Activated naive CD4-positive, alpha-beta T cell treated with anti-CD3 and anti-CD28 coated beads for 36 hours (primary cell): ENCODE measurements at regions of chr1 and their contacts with region 1.

Region 1: GRCh38 chr1:86499987-86500593 is 31.4 kb downstream of the CLCA1 start:
- DNase-seq: no peak
- H3K4me3 Mint-ChIP-seq: no peak overlapping the region
- H3K27ac Mint-ChIP-seq: no peak overlapping the region
- H3K4me1 Mint-ChIP-seq: peaks cover 7% of the 10 kb centered on the region
- H3K27me3 Mint-ChIP-seq: peaks cover 8% of the 10 kb centered on the region

Region 2: DNA sequence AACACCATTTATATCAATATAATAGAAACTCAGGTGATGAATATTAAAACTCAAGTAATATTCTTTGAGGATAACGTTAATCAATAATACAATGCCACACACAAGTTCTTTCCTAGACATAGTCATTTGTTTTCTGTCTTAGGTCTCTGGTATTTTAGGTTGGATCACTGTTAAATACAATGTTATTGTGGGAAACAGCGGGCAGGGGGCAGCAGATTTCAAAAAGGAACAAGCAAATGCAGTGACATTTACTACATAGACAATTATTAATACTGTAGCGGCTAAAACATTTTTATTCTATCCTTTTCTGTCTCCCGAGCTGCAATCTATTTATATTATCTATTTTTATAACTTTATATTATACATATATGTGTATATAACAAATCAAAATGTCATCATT is 605.4 kb before region 1 on chr1:
- CTCF ChIA-PET with region 1: no interaction called
- intact Hi-C with region 1: no loop called
- DNase-seq: peak; percentile 30
- H3K4me3 Mint-ChIP-seq: no peak overlapping the region
- H3K27ac Mint-ChIP-seq: no peak overlapping the region
- H3K4me1 Mint-ChIP-seq: no peaks in the 10 kb centered on the region
- H3K27me3 Mint-ChIP-seq: peaks cover 2% of the 10 kb centered on the region

Region 3: GRCh38 chr1:86380257-86380861 is 119.7 kb before region 1 on chr1:
- CTCF ChIA-PET with region 1: interaction called, 44 read pairs
- intact Hi-C with region 1: loop called (anchors 1 kb)
- DNase-seq: peak; percentile 18
- H3K4me3 Mint-ChIP-seq: no peak overlapping the region
- H3K27ac Mint-ChIP-seq: no peak overlapping the region
- H3K4me1 Mint-ChIP-seq: peaks cover 8% of the 10 kb centered on the region
- H3K27me3 Mint-ChIP-seq: no peaks in the 10 kb centered on the region

Region 4: DNA sequence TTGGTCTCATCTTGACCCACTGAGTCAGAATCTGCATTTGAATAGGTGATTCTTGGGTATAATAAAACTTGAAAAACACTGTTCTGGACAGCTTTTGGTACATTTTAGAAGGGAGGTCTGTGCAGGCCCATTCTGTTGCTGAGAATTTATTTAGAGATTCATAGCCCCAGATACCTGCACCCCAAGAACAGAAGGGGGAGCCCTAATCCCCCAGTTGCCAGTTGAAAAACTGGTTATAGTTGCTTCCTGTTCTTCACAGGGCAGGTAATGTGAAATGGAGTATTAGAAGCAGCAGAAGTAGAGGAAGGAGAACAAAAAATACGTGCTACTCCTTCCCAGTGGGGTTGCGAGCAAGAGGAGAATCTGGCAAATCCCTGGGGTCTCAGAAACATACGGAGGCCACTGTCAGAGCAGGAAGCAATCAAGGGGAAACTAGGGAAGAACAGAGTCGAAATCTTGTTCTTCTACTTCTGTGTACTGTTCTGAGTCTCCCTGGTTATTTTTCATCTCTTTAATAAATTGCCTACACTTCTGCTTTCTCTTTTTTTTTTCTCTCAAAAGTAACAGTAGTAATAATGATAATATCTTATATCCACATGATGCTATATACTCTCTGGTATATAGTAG is 80.7 kb before region 1 on chr1:
- CTCF ChIA-PET with region 1: interaction called, 10 read pairs
- intact Hi-C with region 1: loop called (anchors 1 kb)
- DNase-seq: peak; percentile 71
- H3K4me3 Mint-ChIP-seq: peak overlapping the region; percentile 60
- H3K27ac Mint-ChIP-seq: no peak overlapping the region
- H3K4me1 Mint-ChIP-seq: peaks cover 4% of the 10 kb centered on the region
- H3K27me3 Mint-ChIP-seq: peaks cover 3% of the 10 kb centered on the region

Region 5: GRCh38 chr1:86447198-86447790 is 52.8 kb before region 1 on chr1:
- CTCF ChIA-PET with region 1: no interaction called
- intact Hi-C with region 1: no loop called
- DNase-seq: no peak
- H3K4me3 Mint-ChIP-seq: no peak overlapping the region
- H3K27ac Mint-ChIP-seq: no peak overlapping the region
- H3K4me1 Mint-ChIP-seq: no peaks in the 10 kb centered on the region
- H3K27me3 Mint-ChIP-seq: no peaks in the 10 kb centered on the region

Region 6: DNA sequence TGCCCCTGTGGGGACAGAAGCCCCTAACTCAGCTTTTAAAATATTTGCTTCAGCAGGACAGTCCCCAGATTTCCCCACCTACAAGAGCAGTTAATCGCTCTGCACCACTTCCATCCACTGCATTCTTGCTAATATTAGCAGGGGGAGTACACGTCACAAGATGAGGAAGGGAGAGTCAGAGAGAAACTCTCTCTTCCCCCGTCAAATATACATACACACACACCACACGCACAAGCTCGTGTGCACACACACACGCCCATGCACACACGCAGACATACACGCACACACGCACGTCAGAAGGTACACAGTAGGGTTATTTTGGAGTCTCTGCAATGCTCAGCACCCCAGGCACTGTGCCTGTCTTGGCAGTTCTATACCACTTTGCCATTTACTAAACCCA is 29.2 kb before region 1 on chr1:
- CTCF ChIA-PET with region 1: interaction called, 8 read pairs
- intact Hi-C with region 1: loop called (anchors 1 kb)
- DNase-seq: no peak
- H3K4me3 Mint-ChIP-seq: no peak overlapping the region
- H3K27ac Mint-ChIP-seq: no peak overlapping the region
- H3K4me1 Mint-ChIP-seq: no peaks in the 10 kb centered on the region
- H3K27me3 Mint-ChIP-seq: peaks cover 1% of the 10 kb centered on the region

Region 7: GRCh38 chr1:86704458-86704971 is 204.4 kb after region 1 on chr1 and contains the start of gene SH3GLB1:
- CTCF ChIA-PET with region 1: interaction called, 8 read pairs
- intact Hi-C with region 1: loop called (anchors 1 kb)
- DNase-seq: peak; percentile 90
- H3K4me3 Mint-ChIP-seq: peak within 1 kb of the TSS; percentile 93
- H3K27ac Mint-ChIP-seq: peak within 1 kb of the TSS; percentile 98
- H3K4me1 Mint-ChIP-seq: peaks cover 40% of the 10 kb centered on the region
- H3K27me3 Mint-ChIP-seq: no peaks in the 10 kb centered on the region
- total RNA-seq, gene SH3GLB1: 45.0 to 45.5 TPM

Region 8: DNA sequence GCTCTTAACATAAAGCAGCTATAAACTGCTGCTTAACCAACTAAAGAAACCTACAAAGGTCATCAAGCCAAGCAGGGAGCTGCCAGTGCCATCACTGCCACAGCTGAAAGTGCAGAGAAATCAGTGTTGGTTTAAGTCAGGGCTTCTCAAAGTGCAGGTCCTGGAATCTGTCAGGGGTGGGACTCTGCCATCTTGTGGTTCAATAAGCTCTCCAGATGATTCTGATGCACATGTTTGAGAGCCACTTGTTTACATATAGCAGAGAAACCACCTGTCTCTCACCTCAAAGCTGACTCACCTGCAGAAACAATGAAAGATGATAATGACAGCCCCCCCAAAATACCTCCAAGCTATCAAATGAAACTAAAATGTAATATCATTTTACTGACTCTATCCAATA is 253.6 kb after region 1 on chr1:
- CTCF ChIA-PET with region 1: interaction called, 5 read pairs
- intact Hi-C with region 1: loop called (anchors 1 kb)
- DNase-seq: peak; percentile 27
- H3K4me3 Mint-ChIP-seq: no peak overlapping the region
- H3K27ac Mint-ChIP-seq: no peak overlapping the region
- H3K4me1 Mint-ChIP-seq: no peaks in the 10 kb centered on the region
- H3K27me3 Mint-ChIP-seq: peaks cover 12% of the 10 kb centered on the region

Region 9: DNA sequence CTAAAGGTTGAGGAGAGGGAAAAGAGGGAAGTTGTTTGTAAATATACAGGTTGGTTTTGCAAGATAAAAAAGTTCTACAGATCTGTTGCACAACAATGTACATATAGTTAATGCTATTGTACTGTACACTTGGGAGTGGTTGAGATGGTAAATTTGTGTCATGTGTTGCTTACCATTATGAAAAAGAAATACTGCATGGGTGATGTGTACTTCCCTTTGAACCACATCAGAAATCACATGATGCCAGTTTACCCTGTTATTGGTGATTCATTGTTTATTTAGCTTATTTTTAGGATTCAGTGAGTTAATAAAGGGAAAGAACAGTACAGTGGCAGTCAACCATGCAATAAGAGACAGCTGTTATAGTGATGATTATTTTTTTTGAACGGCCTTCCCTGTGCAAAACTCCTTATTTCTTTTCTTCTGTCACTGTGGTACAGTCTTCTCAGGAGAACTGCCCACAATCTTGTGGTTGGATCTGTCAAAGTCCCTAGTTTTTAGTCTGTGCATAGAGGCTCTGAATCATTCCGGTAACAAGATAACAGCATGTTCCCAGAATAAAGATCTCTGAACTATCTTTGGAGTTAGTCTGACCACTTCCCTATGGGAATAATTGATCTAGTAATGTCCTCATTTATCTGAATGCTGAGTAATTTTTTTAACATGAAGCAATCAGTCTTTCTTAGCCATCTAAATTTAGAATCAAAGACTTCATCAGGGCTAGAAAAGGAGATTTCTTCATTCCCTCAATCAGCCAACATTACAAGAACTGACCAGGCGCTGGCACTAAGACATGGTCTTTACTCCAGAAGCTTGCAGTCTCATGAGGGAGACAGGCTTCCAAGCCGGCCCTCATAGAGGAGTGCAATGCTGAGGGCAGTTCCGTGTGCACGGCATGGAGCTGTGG is 288.5 kb after region 1 on chr1:
- CTCF ChIA-PET with region 1: no interaction called
- intact Hi-C with region 1: no loop called
- DNase-seq: no peak
- H3K4me3 Mint-ChIP-seq: no peak overlapping the region
- H3K27ac Mint-ChIP-seq: no peak overlapping the region
- H3K4me1 Mint-ChIP-seq: no peaks in the 10 kb centered on the region
- H3K27me3 Mint-ChIP-seq: no peaks in the 10 kb centered on the region

Region 10: DNA sequence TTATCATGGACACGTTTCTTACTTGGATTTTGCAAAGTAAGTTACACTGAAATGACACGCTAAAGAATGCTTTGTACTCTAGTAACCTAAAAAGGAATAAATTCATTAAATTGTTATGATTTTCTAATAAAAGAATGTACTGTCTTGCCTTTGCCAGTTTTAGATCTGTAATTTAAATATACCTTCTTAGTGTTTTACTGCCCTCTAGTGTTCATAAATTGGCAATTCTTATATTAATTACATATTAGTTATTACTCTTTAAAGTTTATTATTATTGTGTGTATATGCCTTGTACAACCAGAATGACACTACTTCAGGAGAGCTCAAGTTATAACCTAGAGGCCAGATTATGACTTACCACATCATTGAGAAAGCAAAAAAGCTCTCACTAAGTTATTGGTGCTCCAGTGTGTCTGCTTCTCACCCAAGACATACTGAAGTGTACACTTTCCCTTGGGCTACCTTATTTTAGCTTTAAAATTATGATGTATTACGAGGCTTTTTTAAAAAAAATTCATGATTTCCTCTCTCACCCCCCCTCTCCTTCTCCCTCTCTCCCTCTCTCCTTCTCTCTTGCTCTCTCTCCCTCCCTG is 584.2 kb after region 1 on chr1:
- CTCF ChIA-PET with region 1: interaction called, 7 read pairs
- intact Hi-C with region 1: loop called (anchors 1 kb)
- DNase-seq: no peak
- H3K4me3 Mint-ChIP-seq: no peak overlapping the region
- H3K27ac Mint-ChIP-seq: no peak overlapping the region
- H3K4me1 Mint-ChIP-seq: peaks cover 8% of the 10 kb centered on the region
- H3K27me3 Mint-ChIP-seq: no peaks in the 10 kb centered on the region